ENCODE measurements at regions of chr1 and their contacts with region 1.

Region 1: GRCh38 chr1:45465277-45465676 is 25.7 kb downstream of the TESK2 start:
- DNase-seq: no peak
- ATAC-seq: no peak
- H3K4me3 ChIP-seq: no peak overlapping the region
- H3K27ac ChIP-seq: no peak overlapping the region
- H3K4me1 ChIP-seq: no peaks in the 10 kb centered on the region
- H3K27me3 ChIP-seq: no peaks in the 10 kb centered on the region
- CTCF ChIP-seq: no peak
- POLR2A ChIP-seq: no peak
- RAD21 ChIP-seq: no peak

Region 2: DNA sequence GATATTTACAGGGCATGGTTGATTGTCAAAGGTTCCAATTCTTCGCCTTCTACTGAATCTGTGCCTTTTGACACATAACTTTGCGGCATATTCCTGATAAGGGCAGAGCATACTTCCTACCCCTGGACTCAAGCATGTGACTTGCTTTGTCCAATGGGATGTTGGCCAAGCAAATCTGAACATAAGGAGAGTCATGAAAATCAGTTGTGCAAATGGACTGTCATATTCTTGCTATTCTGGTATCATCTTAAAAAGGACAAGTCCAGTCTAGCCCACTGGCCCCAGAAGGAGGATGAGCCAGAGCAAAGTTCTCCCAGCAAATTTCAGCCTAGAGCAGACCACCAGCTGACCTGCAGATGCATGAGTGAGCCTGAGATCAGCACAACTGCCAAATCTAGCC is 84.0 kb before region 1 on chr1:
- CTCF ChIA-PET with region 1: no interaction called
- POLR2A ChIA-PET with region 1: no interaction called
- RAD21 ChIA-PET with region 1: no interaction called
- intact Hi-C with region 1: loop called (anchors 5 kb)
- DNase-seq: no peak
- ATAC-seq: no peak
- H3K4me3 ChIP-seq: no peak overlapping the region
- H3K27ac ChIP-seq: no peak overlapping the region
- H3K4me1 ChIP-seq: no peaks in the 10 kb centered on the region
- H3K27me3 ChIP-seq: no peaks in the 10 kb centered on the region
- CTCF ChIP-seq: no peak
- POLR2A ChIP-seq: no peak
- RAD21 ChIP-seq: no peak

Measured in HCT116 (cell line).